Activated CD4-positive, alpha-beta T cell treated with anti-CD3 and anti-CD28 coated beads for 36 hours (primary cell): ENCODE measurements at regions of chr5 and their contacts with region 1.

Region 1: DNA sequence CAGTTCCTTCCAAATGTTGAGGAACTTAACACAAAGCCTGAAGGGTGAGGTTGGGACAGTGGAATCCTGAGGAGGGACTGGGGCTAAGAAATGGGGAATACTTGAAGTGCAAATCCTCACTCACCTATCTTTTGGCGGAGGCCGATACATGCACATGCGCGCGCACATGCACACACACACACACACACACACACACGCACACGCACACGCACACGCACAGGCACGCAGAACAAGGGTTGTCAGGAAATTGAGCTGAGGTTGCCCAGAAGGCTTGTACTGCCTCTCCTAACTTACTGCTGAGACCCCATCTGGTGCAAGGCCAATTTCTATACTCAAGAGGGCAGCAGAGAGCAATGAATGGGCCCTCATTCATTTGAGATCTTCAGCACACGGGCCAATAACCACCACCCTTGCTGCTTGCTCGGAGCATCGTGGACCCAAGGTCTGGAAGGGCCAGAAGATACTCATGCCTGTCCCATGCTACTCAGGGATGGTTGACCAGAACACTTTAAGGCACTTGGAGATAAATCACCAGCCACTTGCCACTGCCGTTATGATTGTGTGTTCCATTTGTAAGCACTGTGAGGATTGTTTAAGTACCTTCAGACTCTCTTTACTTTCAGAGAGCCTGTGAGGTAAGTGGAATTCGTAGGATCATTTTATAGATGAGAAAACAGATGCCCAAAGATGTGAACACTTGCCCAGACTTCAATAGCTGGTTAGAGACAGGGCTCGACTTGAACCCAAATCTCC is 21.5 kb downstream of the BTF3 start:
- DNase-seq: peak; percentile 78
- ATAC-seq: peak; percentile 100
- H3K4me3 Mint-ChIP-seq: no peak overlapping the region
- H3K27ac Mint-ChIP-seq: no peak overlapping the region
- H3K4me1 Mint-ChIP-seq: peaks cover 5% of the 10 kb centered on the region
- H3K27me3 Mint-ChIP-seq: no peaks in the 10 kb centered on the region

Region 2: DNA sequence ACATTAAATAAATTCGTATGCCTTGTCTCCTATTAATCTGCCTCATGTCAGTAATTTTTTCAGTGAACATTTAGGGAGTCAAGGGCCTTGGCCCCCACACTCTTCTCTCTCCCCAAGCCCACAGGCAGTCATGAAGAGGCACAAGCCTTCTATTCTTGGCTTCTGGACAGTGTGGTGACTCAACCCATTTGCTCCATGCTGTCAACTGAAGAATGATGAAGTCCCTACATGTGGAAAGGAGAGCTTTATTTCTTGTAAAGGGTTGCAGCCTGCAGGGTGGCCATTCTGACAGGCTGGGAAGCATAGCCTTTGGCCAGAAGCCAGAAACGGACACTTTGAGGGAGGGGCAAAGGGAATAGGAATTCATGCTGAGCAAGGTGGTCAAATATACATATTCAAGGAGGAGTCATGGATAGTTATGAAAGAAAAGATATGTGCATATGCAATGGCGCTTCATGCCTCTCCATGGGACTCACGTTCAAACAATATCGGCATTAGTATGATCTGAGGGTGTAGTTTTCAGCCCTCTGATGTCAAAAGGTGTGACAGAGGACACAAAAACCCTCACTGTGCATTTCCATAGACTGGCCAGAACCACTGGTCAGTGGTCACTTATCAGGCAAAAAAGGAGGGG is 14.4 kb after region 1 on chr5:
- CTCF ChIA-PET with region 1: interaction called, 77 read pairs
- POLR2A ChIA-PET with region 1: no interaction called
- intact Hi-C with region 1: loop called (anchors 1 kb)
- DNase-seq: no peak
- ATAC-seq: no peak
- H3K4me3 Mint-ChIP-seq: no peak overlapping the region
- H3K27ac Mint-ChIP-seq: no peak overlapping the region
- H3K4me1 Mint-ChIP-seq: no peaks in the 10 kb centered on the region
- H3K27me3 Mint-ChIP-seq: peaks cover 16% of the 10 kb centered on the region

Region 3: DNA sequence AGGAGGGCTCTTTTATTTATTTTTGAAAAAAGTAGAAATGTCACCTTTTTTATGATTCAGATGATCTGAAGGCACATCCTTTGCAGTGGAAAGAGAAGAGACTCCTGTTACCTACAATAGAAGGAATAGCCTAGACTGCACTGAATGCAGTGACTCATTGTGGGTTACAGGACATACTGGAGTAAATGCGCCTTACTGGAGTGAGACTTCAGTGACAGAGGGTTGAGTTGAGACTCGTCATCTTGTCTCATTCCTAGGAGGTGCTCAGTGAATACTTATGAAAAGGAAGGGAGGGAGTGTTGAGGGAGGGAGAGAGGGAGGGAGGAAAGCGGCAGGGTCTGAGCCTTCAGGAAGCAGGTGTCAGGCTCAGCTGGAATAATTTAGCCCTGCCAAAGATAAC is 20.5 kb after region 1 on chr5:
- CTCF ChIA-PET with region 1: interaction called, 77 read pairs
- POLR2A ChIA-PET with region 1: interaction called, 4 read pairs
- intact Hi-C with region 1: loop called (anchors 1 kb)
- DNase-seq: no peak
- ATAC-seq: peak; percentile 58
- H3K4me3 Mint-ChIP-seq: no peak overlapping the region
- H3K27ac Mint-ChIP-seq: no peak overlapping the region
- H3K4me1 Mint-ChIP-seq: no peaks in the 10 kb centered on the region
- H3K27me3 Mint-ChIP-seq: peaks cover 21% of the 10 kb centered on the region

Region 4: DNA sequence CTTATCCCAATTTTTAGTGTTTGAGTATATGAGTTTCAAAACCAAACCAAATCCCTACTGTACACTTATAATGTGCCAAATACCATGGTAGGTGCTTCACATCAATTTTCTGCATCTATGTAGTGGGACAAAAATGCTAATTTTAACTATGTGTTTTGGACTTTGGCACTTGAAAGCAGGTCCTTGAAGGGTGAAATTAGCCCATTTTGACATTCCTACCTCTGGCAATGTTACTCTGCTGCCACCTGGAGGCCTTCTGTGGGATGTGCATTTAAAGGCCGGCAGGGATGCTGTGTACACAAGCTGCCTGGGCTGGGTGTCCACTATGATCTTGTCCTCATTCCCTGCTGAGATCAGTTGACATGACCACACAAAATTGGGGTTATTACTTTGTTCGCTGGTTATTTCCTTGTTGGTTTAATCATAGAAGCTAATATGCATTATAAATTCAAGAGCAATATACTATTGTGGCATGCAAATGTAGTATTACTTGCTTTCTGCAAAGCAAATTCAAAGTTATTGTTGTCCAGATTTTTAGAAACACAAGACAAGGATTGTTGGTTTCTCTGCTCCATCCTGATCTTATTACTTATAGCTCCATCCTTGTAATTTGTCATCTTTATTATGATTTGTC is 273.1 kb after region 1 on chr5:
- CTCF ChIA-PET with region 1: interaction called, 6 read pairs
- POLR2A ChIA-PET with region 1: no interaction called
- intact Hi-C with region 1: loop called (anchors 1 to 10 kb)
- DNase-seq: peak; percentile 77
- ATAC-seq: peak; percentile 84
- H3K4me3 Mint-ChIP-seq: no peak overlapping the region
- H3K27ac Mint-ChIP-seq: no peak overlapping the region
- H3K4me1 Mint-ChIP-seq: no peaks in the 10 kb centered on the region
- H3K27me3 Mint-ChIP-seq: peaks cover 14% of the 10 kb centered on the region